Dorsolateral prefrontal cortex (tissue), 120 donors: ENCODE measurements at regions of chr4 and their contacts with region 1.

Region 1: DNA sequence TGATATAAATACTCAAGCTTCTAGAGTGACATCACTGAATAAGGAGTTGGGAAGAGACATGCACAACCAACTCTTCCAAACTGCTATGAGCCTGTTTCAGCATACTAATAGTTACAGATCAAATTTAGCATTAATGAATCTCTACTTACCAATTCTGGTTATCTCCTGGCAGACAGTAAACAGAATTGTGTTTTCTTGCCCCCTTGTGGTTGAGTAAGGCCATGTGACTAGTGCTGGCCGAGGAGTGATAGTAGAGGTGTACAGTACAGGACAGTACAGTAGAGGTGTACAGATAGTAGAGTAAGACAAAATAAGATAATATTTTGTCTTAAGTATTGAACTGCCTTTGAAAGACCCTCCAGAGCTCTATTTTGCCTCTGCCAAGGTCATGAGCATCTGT is 681.4 kb downstream of the GABRG1 start:
- DNase-seq: no peak
- H3K4me3 ChIP-seq: no peak overlapping the region
- H3K27ac ChIP-seq: no peak overlapping the region
- H3K27me3 ChIP-seq: no peaks in the 10 kb centered on the region
- CTCF ChIP-seq: peak in 51 of 56 donors; percentile 17 to 66 (median 38)

Region 2: GRCh38 chr4:44927399-44928380 is 514.8 kb before region 1 on chr4:
- intact Hi-C with region 1: loop called in 1 of 2 experiments (anchors 5 kb)
- DNase-seq: peak in 1 of 10 donors; percentile 43
- H3K4me3 ChIP-seq: no peak overlapping the region
- H3K27ac ChIP-seq: no peak overlapping the region
- H3K27me3 ChIP-seq: no peaks in the 10 kb centered on the region
- CTCF ChIP-seq: peak; percentile 26 to 79 (median 60)